HCT116 (cell line): ENCODE measurements at regions of chr7 and their contacts with region 1.

Region 1: DNA sequence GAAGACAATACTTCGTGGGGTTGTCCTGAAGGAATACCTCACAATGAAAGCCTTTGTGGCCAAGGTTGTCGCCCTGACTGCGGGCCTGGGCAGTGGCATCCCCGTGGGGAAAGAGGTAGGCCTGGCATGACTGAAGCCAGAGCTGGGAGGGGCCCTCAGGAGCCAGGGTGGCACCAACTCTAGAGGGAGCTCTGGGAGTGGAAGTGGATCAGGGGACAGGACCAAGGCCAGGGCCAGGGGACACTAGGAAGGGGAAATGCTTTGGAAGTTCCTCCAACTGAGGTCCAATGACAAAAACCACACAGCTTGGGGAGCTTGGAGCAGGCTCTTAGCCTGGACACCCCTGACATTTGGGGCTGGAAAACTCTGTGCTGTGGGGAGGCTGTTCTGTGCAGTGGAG is 5.8 kb downstream of the CLCN1 start:
- DNase-seq: no peak
- ATAC-seq: peak; percentile 88
- H3K4me3 ChIP-seq: no peak overlapping the region
- H3K27ac ChIP-seq: no peak overlapping the region
- H3K4me1 ChIP-seq: no peaks in the 10 kb centered on the region
- H3K27me3 ChIP-seq: no peaks in the 10 kb centered on the region
- CTCF ChIP-seq: peak; percentile 35 to 83 (median 49); a peak in 5 of 6 replicates
- POLR2A ChIP-seq: no peak
- RAD21 ChIP-seq: peak; percentile 88

Region 2: GRCh38 chr7:143372070-143372469 is 50.3 kb after region 1 on chr7:
- CTCF ChIA-PET with region 1: interaction called, 3 read pairs
- POLR2A ChIA-PET with region 1: no interaction called
- RAD21 ChIA-PET with region 1: interaction called in 1 of 2 experiments, 3 read pairs
- intact Hi-C with region 1: loop called (anchors 2 kb)
- DNase-seq: no peak
- ATAC-seq: 0 out of 2 replicates have a peak, but pooled peaks have one; percentile 10
- H3K4me3 ChIP-seq: no peak overlapping the region
- H3K27ac ChIP-seq: no peak overlapping the region
- H3K4me1 ChIP-seq: peaks cover 11 to 53% of the 10 kb centered on the region in 2 experiments
- H3K27me3 ChIP-seq: no peaks in the 10 kb centered on the region
- CTCF ChIP-seq: peak in 2 of 3 experiments; percentile 7 to 15; a peak in 1 of 6 replicates
- POLR2A ChIP-seq: no peak
- RAD21 ChIP-seq: peak; percentile 36; the same call in 1 of the 2 replicates

Region 3: GRCh38 chr7:143487566-143487965 is 165.8 kb after region 1 on chr7:
- CTCF ChIA-PET with region 1: no interaction called
- POLR2A ChIA-PET with region 1: no interaction called
- RAD21 ChIA-PET with region 1: no interaction called
- intact Hi-C with region 1: no loop called
- DNase-seq: no peak
- ATAC-seq: no peak
- H3K4me3 ChIP-seq: no peak overlapping the region
- H3K27ac ChIP-seq: no peak overlapping the region
- H3K4me1 ChIP-seq: peaks cover 5 to 17% of the 10 kb centered on the region in 2 experiments; a peak in 3 of 4 replicates
- H3K27me3 ChIP-seq: no peaks in the 10 kb centered on the region
- CTCF ChIP-seq: no peak
- POLR2A ChIP-seq: no peak
- RAD21 ChIP-seq: no peak